ENCODE measurements at regions of chr4 and their contacts with region 1.

Region 1: DNA sequence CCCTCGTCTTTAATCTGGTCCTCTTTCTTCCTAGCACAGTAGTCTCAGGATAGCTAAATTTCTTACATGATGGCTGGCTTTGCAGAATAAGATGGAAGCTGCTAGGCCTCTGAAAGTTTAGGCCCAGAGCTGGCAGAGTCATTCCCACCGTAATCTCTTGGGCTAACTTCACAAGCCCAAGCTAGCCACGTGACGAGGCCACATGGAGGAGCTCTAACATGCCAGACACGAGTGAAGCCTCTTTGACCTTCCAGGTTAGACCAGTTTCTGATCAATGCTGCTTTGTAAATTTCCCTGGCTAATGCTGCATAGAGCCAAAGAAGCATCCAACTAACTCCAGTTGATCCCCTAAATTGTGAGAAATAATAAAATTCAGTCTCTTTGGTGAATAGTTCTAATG is 9.5 kb upstream of the CENPE start:
- DNase-seq: peak in 1 of 2 donors; percentile 18
- H3K4me3 ChIP-seq: no peak overlapping the region
- H3K27ac ChIP-seq: no peak overlapping the region
- H3K4me1 ChIP-seq: no peaks in the 10 kb centered on the region
- H3K27me3 ChIP-seq: no peaks in the 10 kb centered on the region
- CTCF ChIP-seq: no peak
- EP300 ChIP-seq: no peak
- POLR2A ChIP-seq: no peak

Region 2: GRCh38 chr4:103786014-103786413 is 578.3 kb after region 1 on chr4:
- intact Hi-C with region 1: loop called (anchors 10 kb)
- DNase-seq: peak in 1 of 2 donors; percentile 9
- H3K4me3 ChIP-seq: no peak overlapping the region
- H3K27ac ChIP-seq: no peak overlapping the region
- H3K4me1 ChIP-seq: no peaks in the 10 kb centered on the region
- H3K27me3 ChIP-seq: no peaks in the 10 kb centered on the region
- CTCF ChIP-seq: peak in 2 of 7 experiments; percentile 17 to 30
- EP300 ChIP-seq: no peak
- POLR2A ChIP-seq: no peak

Measured in stomach (tissue), 19 donors.